AG04449 (cell line): ENCODE measurements at regions of chr20 and their contacts with region 1.

Region 1: GRCh38 chr20:44153636-44154043 is 33.3 kb downstream of the JPH2 start:
- DNase-seq: peak; percentile 16
- H3K4me3 ChIP-seq: no peak overlapping the region
- CTCF ChIP-seq: no peak

Region 2: GRCh38 chr20:43721429-43722152 is 432.0 kb before region 1 on chr20:
- CTCF ChIA-PET with region 1: no interaction called
- POLR2A ChIA-PET with region 1: no interaction called
- DNase-seq: no peak
- H3K4me3 ChIP-seq: no peak overlapping the region
- CTCF ChIP-seq: no peak

Region 3: GRCh38 chr20:44125332-44126127 is 28.1 kb before region 1 on chr20:
- CTCF ChIA-PET with region 1: no interaction called
- POLR2A ChIA-PET with region 1: no interaction called
- DNase-seq: no peak
- H3K4me3 ChIP-seq: no peak overlapping the region
- CTCF ChIP-seq: no peak

Region 4: DNA sequence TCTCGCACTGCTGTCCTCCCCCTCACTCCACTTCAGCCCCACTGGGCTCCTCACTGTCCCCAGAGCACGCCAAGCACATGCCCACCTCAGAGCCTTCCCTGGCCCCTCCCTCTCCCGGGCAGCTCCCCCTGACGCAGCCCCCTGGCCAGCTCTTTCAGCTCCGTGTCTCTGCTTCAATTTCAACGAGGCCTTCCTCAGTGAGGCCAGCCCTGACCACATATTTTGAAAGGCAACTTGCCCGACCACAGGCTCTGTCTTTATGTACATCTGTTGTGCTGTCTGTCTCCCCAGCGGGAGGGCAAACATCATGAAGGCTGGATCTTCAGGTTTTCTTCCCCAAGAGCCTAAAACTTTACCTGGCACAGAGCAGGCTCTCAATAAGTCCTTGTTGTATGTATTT is 11.2 kb before region 1 on chr20:
- CTCF ChIA-PET with region 1: interaction called, 11 read pairs
- POLR2A ChIA-PET with region 1: no interaction called
- DNase-seq: peak; percentile 44
- H3K4me3 ChIP-seq: no peak overlapping the region
- CTCF ChIP-seq: no peak

Region 5: DNA sequence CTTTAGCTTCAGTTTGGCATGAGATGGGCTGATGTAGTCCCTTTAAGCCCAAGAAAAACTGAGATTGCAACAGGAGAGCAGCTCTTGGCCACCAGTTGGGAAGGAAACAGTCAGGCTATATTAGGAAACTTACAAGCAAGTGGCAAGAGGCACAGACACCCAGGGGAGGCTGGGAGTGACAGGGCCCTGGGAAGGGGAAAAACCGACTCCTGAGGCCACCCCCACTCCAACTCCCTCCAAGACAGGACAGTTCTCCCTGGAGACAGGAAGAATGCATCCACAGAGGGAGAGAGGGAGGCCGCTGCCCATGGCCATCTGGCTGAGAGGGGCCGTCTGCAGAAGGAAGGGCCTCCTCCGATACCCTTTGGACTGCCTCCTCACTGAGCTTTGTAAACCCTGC is 12.8 kb after region 1 on chr20:
- CTCF ChIA-PET with region 1: interaction called, 12 read pairs
- POLR2A ChIA-PET with region 1: interaction called, 4 read pairs
- DNase-seq: no peak
- H3K4me3 ChIP-seq: no peak overlapping the region
- CTCF ChIP-seq: no peak

Region 6: DNA sequence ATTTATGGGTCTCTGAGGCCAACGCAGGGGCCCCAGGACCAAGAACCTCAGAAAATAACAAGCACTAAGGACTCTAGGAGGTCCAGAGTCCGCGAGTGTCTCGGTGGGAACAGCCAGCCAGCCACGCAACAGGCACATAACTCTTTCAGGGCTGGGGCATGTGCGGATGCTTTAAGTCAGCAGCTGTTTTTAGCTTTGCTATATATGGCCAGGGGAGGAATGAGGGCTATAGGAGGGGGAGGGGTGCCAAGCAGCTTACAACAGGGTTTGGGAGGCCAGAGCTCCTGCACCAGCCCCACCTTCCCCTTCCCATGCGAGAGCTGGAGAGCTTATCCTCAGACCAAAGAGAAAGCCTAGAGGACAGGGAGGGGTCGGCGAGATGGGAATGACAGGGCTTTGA is 27.2 kb after region 1 on chr20:
- CTCF ChIA-PET with region 1: interaction called, 11 read pairs
- POLR2A ChIA-PET with region 1: interaction called, 3 read pairs
- DNase-seq: no peak
- H3K4me3 ChIP-seq: no peak overlapping the region
- CTCF ChIP-seq: no peak